Dorsolateral prefrontal cortex (tissue), 120 donors: ENCODE measurements at regions of chr9 and their contacts with region 1.

Region 1: DNA sequence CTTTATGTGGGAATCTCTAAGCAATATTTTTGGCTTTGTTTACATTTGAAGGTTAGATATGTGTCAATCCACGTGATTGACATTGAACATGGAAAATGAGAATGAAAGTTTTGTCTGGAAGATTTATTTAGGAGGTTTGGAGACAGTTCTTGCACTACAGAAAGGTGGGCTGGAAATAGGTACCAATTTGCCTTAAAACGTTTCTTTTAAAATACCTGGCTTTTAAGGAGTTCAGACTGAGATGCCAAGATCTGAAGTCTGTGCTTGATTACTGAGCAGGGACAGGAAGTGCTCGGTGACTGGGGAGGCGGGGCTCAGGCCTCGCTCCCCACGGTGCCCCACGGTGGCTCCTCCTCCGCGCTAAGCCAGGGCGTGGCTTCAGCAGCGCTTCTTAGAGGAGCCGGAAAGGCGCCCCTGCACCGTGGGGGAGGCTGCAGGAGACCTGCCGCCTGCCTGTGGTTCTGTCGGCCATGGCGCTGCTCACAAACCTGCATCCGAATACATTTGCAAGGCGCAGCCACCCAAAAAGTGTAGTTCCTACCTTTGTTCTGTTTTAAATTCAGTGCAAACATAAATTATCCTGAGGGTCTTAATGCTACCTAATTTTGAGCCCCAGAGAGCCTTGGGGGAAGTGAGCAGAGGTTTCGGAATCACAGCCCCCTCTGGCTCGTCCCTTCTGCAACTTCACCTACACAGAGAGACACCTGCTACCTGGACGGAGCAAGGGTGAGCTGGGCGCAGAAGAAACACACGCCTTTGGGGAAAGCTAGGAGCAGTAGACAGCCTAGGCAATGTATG is 49.2 kb downstream of the USP20 start:
- DNase-seq: peak; percentile 53 to 85 (median 79)
- H3K4me3 ChIP-seq: peak overlapping the region in 57 of 59 donors; percentile 3 to 64 (median 39)
- H3K27ac ChIP-seq: peak overlapping the region in 58 of 59 donors; percentile 6 to 94 (median 88)
- H3K27me3 ChIP-seq: no peaks in the 10 kb centered on the region
- CTCF ChIP-seq: peak in 20 of 56 donors; percentile 0 to 36 (median 10)

Region 2: DNA sequence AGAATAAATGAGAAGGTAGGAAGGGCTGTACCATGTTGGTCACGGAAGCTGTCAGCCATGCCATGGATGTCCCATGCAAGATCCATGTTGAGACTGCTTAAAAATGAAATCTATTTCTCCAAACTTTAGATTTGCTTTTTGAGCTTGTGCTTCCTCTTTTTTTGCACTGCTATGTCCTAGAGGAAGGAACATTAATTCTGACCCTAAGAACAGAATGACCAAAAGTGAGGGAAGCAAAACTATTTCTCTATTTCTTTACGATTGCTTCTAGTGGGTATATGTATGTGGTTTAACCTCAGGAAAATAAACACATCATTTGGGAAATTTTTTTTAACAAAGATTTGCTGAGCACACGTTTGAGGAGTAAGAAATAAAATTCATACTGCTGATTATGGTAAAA is 35.4 kb after region 1 on chr9:
- intact Hi-C with region 1: loop called in 1 of 2 experiments (anchors 5 kb)
- DNase-seq: no peak
- H3K4me3 ChIP-seq: no peak overlapping the region
- H3K27ac ChIP-seq: peak overlapping the region in 41 of 59 donors; percentile 0 to 94 (median 66)
- H3K27me3 ChIP-seq: no peaks in the 10 kb centered on the region
- CTCF ChIP-seq: no peak

Region 3: DNA sequence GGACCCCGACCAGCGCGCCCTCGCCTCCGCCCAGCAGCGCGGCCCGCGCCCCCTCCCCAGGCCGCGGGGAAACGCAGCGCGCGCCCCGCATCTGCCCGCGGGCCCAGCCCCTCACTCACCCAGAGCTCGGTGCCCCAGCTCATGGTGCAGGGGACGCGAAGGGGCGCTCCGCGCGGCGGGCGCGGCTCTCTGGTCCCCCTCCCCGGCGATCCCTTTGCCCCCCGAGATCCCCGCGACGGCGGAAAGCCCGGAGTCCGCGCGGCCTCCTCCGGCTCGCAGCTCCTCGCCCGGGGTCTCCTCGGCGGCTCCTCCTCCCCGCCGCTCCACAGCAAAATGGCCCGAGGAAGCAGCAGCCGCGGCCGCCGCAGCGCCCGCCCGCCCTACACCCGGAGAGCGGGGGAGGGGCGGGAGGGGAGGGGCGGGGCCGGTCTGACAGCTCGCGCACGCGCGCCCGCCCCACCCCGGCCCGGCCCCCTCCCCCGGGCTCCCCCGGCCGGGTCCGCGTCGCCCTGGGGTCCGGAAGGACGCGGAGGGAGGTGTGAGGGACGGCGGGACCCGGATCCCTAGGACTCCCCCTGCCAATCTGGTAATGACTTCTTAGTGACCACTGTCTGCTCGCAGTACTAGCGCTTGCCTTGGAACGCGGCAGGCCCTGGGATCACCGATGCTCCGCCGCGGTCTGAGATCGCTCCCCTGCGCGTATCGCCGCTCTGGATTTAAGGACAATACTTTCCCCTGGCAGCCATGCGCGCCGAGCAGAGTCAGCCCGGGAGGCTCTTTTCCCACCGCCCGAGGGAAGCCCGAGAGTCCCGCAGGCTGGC is 158.6 kb after region 1 on chr9 and contains the start of gene FNBP1:
- intact Hi-C with region 1: loop called (anchors 2 kb)
- DNase-seq: peak; percentile 65 to 86 (median 75)
- H3K4me3 ChIP-seq: peak within 1 kb of the TSS; percentile 50 to 95 (median 87)
- H3K27ac ChIP-seq: peak within 1 kb of the TSS; percentile 84 to 97 (median 95)
- H3K27me3 ChIP-seq: no peaks in the 10 kb centered on the region
- CTCF ChIP-seq: peak in 16 of 56 donors; percentile 0 to 37 (median 14)
- total RNA-seq, gene FNBP1: 53.9 to 197 (median 99.8) TPM

Region 4: GRCh38 chr9:130107234-130107861 is 222.9 kb after region 1 on chr9:
- intact Hi-C with region 1: loop called in 1 of 2 experiments (anchors 5 kb)
- DNase-seq: peak; percentile 79 to 96 (median 88)
- H3K4me3 ChIP-seq: no peak overlapping the region
- H3K27ac ChIP-seq: peak overlapping the region in 43 of 59 donors; percentile 2 to 79 (median 53)
- H3K27me3 ChIP-seq: no peaks in the 10 kb centered on the region
- CTCF ChIP-seq: peak; percentile 67 to 96 (median 88)

Region 5: DNA sequence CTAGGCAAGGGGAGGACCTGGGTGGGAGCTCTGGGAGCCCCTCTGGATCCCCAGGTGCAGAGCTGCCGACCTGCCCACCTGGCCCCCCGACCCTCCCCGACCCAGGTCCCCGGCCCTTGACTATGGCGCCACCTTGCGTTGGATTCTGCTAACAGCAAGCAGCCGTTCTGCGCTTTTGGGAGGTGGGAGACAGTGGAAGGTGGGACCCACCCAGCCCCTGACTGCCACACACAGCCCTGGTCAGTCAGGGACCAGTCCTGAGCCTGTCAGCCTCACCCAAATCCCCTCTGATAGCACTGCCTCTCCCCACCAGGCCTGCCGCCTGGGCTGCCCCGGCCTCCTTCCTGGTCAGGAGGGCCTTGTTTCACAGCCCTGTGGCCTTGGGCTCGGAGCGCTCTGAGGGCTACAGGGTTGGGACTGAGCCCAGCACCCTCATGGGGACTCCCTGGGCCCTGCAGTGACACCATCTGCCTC is 459.1 kb after region 1 on chr9:
- intact Hi-C with region 1: loop called in 1 of 2 experiments (anchors 10 kb)
- DNase-seq: peak in 3 of 10 donors; percentile 13 to 27 (median 21)
- H3K4me3 ChIP-seq: no peak overlapping the region
- H3K27ac ChIP-seq: no peak overlapping the region
- H3K27me3 ChIP-seq: peaks cover 0 to 6% (median 0%) of the 10 kb centered on the region in 45 donors
- CTCF ChIP-seq: peak in 55 of 56 donors; percentile 34 to 75 (median 63)